Lower lobe of right lung (tissue), 2 donors: ENCODE measurements at regions of chr2 and their contacts with region 1.

Region 1: GRCh38 chr2:213151437-213152064 is at the start of gene IKZF2:
- DNase-seq: peak; percentile 91
- ATAC-seq: peak; percentile 94 to 97
- H3K4me3 ChIP-seq: peak within 1 kb of the TSS; percentile 64
- H3K27ac ChIP-seq: peak within 1 kb of the TSS; percentile 89
- H3K4me1 ChIP-seq: peaks cover 28% of the 10 kb centered on the region
- H3K27me3 ChIP-seq: no peaks in the 10 kb centered on the region
- CTCF ChIP-seq: no peak
- total RNA-seq, gene IKZF2: 16.5 TPM

Region 2: GRCh38 chr2:212777020-212777491 is 374.5 kb before region 1 on chr2:
- intact Hi-C with region 1: loop called (anchors 5 kb)
- DNase-seq: no peak
- ATAC-seq: no peak
- H3K4me3 ChIP-seq: no peak overlapping the region
- H3K27ac ChIP-seq: no peak overlapping the region
- H3K4me1 ChIP-seq: no peaks in the 10 kb centered on the region
- H3K27me3 ChIP-seq: no peaks in the 10 kb centered on the region
- CTCF ChIP-seq: peak; percentile 63

Region 3: GRCh38 chr2:212818046-212818445 is 333.5 kb before region 1 on chr2:
- intact Hi-C with region 1: no loop called
- DNase-seq: no peak
- ATAC-seq: no peak
- H3K4me3 ChIP-seq: no peak overlapping the region
- H3K27ac ChIP-seq: no peak overlapping the region
- H3K4me1 ChIP-seq: no peaks in the 10 kb centered on the region
- H3K27me3 ChIP-seq: no peaks in the 10 kb centered on the region
- CTCF ChIP-seq: no peak